ENCODE measurements at regions of chr6 and their contacts with region 1.

Region 1: GRCh38 chr6:17156112-17156921 is 54.5 kb downstream of the STMND1 start:
- DNase-seq: peak; percentile 89
- ATAC-seq: peak; percentile 90
- H3K4me3 ChIP-seq: no peak overlapping the region
- H3K27ac ChIP-seq: no peak overlapping the region
- H3K4me1 ChIP-seq: no peaks in the 10 kb centered on the region
- H3K27me3 ChIP-seq: peaks cover 13% of the 10 kb centered on the region
- CTCF ChIP-seq: peak; percentile 91
- POLR2A ChIP-seq: peak; percentile 49; the same call in 1 of the 2 replicates
- RAD21 ChIP-seq: peak; percentile 96

Region 2: GRCh38 chr6:17392978-17393891 is 236.9 kb after region 1 on chr6 and contains the start of gene CAP2:
- CTCF ChIA-PET with region 1: no interaction called
- POLR2A ChIA-PET with region 1: no interaction called
- dilution Hi-C with region 1: no loop called
- in situ Hi-C with region 1: no loop called
- intact Hi-C with region 1: loop called (anchors 10 kb)
- DNase-seq: peak; percentile 59
- ATAC-seq: peak; percentile 91
- H3K4me3 ChIP-seq: peak within 1 kb of the TSS; percentile 53
- H3K27ac ChIP-seq: peak within 1 kb of the TSS; percentile 94
- H3K4me1 ChIP-seq: peaks cover 6% of the 10 kb centered on the region; the same call in 1 of the 2 replicates
- H3K27me3 ChIP-seq: no peaks in the 10 kb centered on the region
- CTCF ChIP-seq: no peak
- POLR2A ChIP-seq: peak; percentile 39; the same call in 1 of the 2 replicates
- RAD21 ChIP-seq: peak; percentile 4; the same call in 1 of the 2 replicates
- total RNA-seq, gene CAP2: 14.5 and 16.1 TPM in 2 replicates

Region 3: DNA sequence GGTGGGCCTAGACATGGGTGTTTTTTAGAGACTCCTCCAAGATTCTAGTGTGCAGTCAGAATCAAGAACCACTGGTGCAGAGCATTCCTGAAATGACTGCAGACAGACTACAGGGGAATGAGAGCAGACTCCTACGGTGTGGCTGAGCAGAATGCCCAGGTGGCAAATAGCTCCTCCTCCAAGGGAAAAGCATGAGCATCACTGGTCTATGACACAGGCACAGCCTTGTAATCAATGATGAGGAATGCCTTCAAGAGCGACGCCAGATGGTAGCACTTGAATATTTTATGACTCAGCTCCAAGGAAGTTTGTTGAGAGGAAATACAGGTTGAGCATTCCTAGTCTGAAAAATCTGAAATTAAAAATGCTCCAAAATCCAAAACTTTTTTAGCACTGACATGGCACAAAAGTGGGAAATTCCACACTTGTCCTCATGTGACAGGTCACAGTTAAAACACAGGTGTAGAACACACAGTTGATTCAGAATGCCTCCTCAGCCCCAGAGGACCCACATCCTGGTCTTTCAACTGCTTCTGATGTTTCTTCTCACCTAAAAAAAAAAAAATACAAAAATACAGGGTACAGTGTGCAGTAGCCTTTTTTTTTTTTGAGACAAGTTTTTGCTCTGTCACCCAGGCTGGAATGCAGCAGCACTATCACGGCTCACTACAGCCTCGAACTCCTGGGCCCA is 433.2 kb after region 1 on chr6:
- CTCF ChIA-PET with region 1: interaction called, 5 read pairs
- POLR2A ChIA-PET with region 1: no interaction called
- dilution Hi-C with region 1: no loop called
- in situ Hi-C with region 1: loop called (anchors 5 kb)
- intact Hi-C with region 1: loop called (anchors 1 kb)
- DNase-seq: peak; percentile 95
- ATAC-seq: peak; percentile 94
- H3K4me3 ChIP-seq: no peak overlapping the region
- H3K27ac ChIP-seq: no peak overlapping the region
- H3K4me1 ChIP-seq: no peaks in the 10 kb centered on the region
- H3K27me3 ChIP-seq: no peaks in the 10 kb centered on the region
- CTCF ChIP-seq: 0 out of 2 replicates have a peak, but pooled peaks have one; percentile 12
- POLR2A ChIP-seq: no peak
- RAD21 ChIP-seq: peak; percentile 19; the same call in 1 of the 2 replicates

Region 4: GRCh38 chr6:17808609-17809008 is 652.3 kb after region 1 on chr6:
- CTCF ChIA-PET with region 1: no interaction called
- POLR2A ChIA-PET with region 1: no interaction called
- dilution Hi-C with region 1: no loop called
- in situ Hi-C with region 1: no loop called
- intact Hi-C with region 1: loop called (anchors 1 kb)
- DNase-seq: peak; percentile 37
- ATAC-seq: peak; percentile 67
- H3K4me3 ChIP-seq: no peak overlapping the region
- H3K27ac ChIP-seq: no peak overlapping the region; the same call in 1 of the 2 replicates
- H3K4me1 ChIP-seq: peaks cover 5% of the 10 kb centered on the region
- H3K27me3 ChIP-seq: no peaks in the 10 kb centered on the region
- CTCF ChIP-seq: no peak
- POLR2A ChIP-seq: no peak
- RAD21 ChIP-seq: no peak